Posterior cingulate gyrus (tissue), 11 donors: ENCODE measurements at regions of chrX and their contacts with region 1.

Region 1: DNA sequence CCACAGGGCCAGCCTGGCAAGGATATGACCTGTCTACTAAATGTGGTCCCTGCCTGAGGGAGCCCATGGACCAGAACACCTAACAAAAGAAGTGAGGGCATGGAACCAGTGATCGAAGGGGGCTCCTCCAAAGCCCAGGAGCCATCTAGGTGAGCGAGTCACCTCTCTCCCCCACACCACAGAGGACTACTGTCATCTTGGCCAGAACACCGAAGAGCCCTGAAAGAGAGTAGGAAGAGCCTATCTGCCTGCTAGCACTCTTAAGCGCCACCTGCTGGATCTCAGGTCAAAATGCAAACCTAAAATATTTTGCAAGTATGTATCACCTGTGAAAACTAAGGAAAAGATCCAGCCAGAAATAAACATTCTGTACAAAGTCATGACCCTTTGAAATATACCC is 137.9 kb upstream of the ZXDB start:
- DNase-seq: peak in 2 of 10 donors; percentile 7 to 33

Region 2: DNA sequence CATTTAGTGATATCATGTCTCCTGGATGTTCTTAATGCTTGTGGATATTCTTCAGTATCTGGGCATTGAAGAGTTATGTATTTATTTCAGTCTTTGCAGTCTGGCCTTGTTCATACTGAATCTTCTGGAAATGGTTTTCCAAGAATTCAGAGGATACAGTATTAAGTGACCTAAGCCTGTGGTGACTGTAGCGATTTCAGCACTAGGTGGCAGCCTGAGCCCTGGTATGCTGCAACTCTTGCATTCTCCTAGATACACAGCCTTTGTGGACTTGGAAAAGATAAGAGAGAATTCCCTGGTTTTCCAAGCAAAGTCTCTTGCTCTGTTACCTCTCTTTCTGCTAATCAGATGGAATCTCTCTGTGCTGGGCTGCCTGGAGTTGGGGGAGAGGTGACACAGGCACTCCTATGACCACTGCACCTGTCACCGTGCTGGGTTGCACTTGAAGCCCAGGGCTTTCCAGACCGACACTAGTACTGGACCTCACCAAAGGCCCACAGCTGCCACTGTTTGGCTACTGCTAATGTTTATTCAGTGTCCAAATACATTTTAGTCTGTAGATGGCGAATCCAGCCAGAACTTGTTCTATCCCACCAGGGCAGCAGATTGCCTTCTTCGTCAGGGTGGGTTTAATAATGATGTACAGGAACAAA is 297.4 kb before region 1 on chrX:
- intact Hi-C with region 1: loop called (anchors 2 kb)
- DNase-seq: peak in 8 of 10 donors; percentile 17 to 86 (median 37)